Activated CD8-positive, alpha-beta T cell treated with anti-CD3 and anti-CD28 coated beads, Interleukin-2, amount 10 ng/mL, durations not matched to agents 7 days and 5 days (primary cell): ENCODE measurements at regions of chr6 and their contacts with region 1.

Region 1: GRCh38 chr6:4906293-4907276 is 97.3 kb downstream of the RPP40 start:
- DNase-seq: no peak
- ATAC-seq: peak; percentile 66
- H3K4me3 Mint-ChIP-seq: peak overlapping the region; percentile 70
- H3K27ac Mint-ChIP-seq: peak overlapping the region; percentile 94
- H3K4me1 Mint-ChIP-seq: peaks cover 39% of the 10 kb centered on the region
- H3K27me3 Mint-ChIP-seq: no peaks in the 10 kb centered on the region

Region 2: DNA sequence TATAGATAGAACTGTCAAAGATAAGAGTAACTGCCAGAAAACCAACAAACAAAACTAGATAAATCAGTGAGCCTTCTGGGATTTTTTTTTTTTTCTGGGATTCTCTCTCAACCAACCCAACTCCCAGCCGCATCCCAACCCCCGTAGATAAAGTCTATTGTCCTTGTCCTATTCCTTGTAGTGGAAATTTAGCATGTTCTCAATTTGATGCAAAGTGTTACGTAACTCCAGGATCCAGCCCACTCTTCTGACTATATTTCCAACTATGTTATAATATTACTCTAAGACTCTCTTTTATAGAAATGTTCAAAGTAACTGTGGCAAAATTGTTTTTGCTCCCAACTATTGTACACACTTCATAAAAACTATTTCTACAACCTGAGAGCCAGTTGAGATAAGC is 145.8 kb before region 1 on chr6:
- CTCF ChIA-PET with region 1: no interaction called
- POLR2A ChIA-PET with region 1: no interaction called
- DNase-seq: no peak
- ATAC-seq: no peak
- H3K4me3 Mint-ChIP-seq: no peak overlapping the region
- H3K27ac Mint-ChIP-seq: no peak overlapping the region
- H3K4me1 Mint-ChIP-seq: no peaks in the 10 kb centered on the region
- H3K27me3 Mint-ChIP-seq: peaks cover 9% of the 10 kb centered on the region

Region 3: GRCh38 chr6:4916954-4917561 is 10.5 kb after region 1 on chr6:
- CTCF ChIA-PET with region 1: interaction called, 15 read pairs
- POLR2A ChIA-PET with region 1: interaction called, 3 read pairs
- DNase-seq: peak; percentile 47
- ATAC-seq: peak; percentile 86
- H3K4me3 Mint-ChIP-seq: peak overlapping the region; percentile 27
- H3K27ac Mint-ChIP-seq: peak overlapping the region; percentile 83
- H3K4me1 Mint-ChIP-seq: peaks cover 55% of the 10 kb centered on the region
- H3K27me3 Mint-ChIP-seq: no peaks in the 10 kb centered on the region

Region 4: DNA sequence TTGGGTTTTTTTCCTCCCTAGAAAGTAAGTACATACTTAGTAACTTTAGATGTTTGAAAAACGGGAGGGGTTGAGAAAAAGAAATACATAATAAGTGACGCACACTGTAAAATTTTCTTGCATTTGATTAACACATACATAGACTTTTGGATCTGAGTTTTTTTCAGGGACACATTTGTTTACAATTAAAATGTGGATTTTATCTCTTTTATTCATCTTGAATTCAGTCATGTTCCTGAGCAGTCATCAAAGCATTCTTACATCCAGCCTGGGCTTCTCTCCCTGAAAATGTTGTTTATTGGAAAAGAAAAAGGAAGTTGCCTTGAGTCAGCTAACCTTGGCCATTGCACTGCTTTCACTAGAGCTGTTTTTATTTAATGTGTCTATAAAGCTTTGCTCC is 105.9 kb after region 1 on chr6:
- CTCF ChIA-PET with region 1: no interaction called
- POLR2A ChIA-PET with region 1: no interaction called
- DNase-seq: no peak
- ATAC-seq: no peak
- H3K4me3 Mint-ChIP-seq: no peak overlapping the region
- H3K27ac Mint-ChIP-seq: no peak overlapping the region
- H3K4me1 Mint-ChIP-seq: no peaks in the 10 kb centered on the region
- H3K27me3 Mint-ChIP-seq: peaks cover 1% of the 10 kb centered on the region

Region 5: DNA sequence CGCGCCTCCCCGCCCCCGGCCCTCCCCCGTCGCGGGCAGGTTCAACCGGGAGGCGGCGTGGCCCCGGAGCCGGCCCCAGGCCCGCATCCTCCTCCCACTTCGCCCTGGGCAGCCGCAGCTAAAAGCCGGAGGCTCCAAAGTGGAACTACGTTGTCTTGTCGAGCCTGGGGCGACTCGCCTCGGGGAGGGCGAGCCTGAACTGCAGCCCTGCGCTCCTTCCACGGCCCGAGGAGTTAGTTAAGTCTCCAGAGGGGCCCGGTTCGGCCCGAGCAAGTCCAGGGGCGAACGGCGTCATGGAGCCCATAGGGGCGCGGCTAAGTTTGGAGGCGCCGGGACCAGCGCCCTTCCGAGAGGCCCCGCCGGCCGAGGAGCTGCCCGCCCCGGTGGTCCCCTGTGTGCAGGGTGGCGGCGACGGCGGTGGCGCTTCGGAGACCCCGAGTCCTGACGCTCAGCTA is 178.6 kb after region 1 on chr6 and contains the start of gene PPP1R3G:
- CTCF ChIA-PET with region 1: no interaction called
- POLR2A ChIA-PET with region 1: no interaction called
- DNase-seq: peak; percentile 22
- ATAC-seq: peak; percentile 37
- H3K4me3 Mint-ChIP-seq: peak within 1 kb of the TSS; percentile 69
- H3K27ac Mint-ChIP-seq: no peak within 1 kb of the TSS
- H3K4me1 Mint-ChIP-seq: peaks cover 6% of the 10 kb centered on the region
- H3K27me3 Mint-ChIP-seq: peaks cover 44% of the 10 kb centered on the region
- total RNA-seq, gene PPP1R3G: 0.05 to 0.11 TPM